ENCODE measurements at regions of chr1 and their contacts with region 1.

Region 1: GRCh38 chr1:40404670-40405462 is 31.3 kb downstream of the SMAP2 start:
- DNase-seq: peak; percentile 36 to 66
- H3K4me3 ChIP-seq: no peak overlapping the region
- H3K4me1 ChIP-seq: peaks cover 12% of the 10 kb centered on the region
- H3K27me3 ChIP-seq: no peaks in the 10 kb centered on the region

Region 2: GRCh38 chr1:40143891-40144575 is 260.8 kb before region 1 on chr1:
- in situ Hi-C with region 1: loop called (anchors 10 kb)
- DNase-seq: peak; percentile 65 to 80
- H3K4me3 ChIP-seq: no peak overlapping the region
- H3K4me1 ChIP-seq: no peaks in the 10 kb centered on the region
- H3K27me3 ChIP-seq: peaks cover 23% of the 10 kb centered on the region

Measured in HAP-1 (cell line).